ENCODE measurements at regions of chr1 and their contacts with region 1.

Region 1: DNA sequence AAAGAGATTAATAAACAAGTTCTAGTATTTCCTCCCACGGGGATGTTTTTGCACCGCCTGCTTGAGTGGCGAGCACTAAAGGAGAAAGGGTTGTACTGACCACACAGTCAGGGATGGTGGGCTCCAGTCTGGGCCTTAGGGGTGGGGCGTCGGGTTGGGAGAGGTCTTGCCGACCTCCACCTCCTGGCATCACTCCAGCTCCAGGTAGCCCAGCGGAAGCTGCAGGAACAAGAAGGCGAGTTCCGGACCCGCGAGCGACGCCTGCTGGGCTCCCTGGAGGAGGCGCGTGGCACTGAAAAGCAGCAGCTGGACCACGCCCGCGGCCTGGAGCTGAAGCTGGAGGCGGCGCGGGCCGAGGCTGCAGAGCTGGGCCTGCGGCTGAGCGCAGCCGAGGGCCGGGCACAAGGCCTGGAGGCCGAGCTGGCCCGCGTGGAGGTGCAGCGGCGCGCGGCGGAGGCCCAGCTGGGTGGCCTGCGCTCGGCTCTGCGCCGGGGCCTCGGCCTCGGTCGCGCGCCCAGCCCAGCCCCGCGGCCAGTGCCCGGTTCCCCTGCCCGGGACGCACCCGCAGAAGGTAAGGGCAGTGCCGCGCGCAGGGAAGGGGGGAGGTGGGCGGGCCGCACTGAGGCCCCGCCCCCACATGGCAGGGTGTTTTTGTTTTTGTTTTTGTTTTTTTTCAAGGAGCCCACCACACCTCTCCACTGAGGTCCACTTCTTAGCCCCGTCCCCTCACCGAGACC is 19.7 kb downstream of the MFAP2 start:
- DNase-seq: peak; percentile 79 to 88 (median 86)
- ATAC-seq: peak; percentile 41 to 91 (median 78)
- H3K4me3 ChIP-seq: peak overlapping the region in 10 of 12 donors; percentile 22 to 58 (median 48)
- H3K27ac ChIP-seq: peak overlapping the region in 4 of 12 donors; percentile 27 to 59 (median 41)
- H3K4me1 ChIP-seq: peaks cover 0 to 15% (median 2%) of the 10 kb centered on the region in 12 donors
- H3K27me3 ChIP-seq: no peaks in the 10 kb centered on the region
- CTCF ChIP-seq: peak; percentile 13 to 74 (median 60)
- POLR2A ChIP-seq: no peak

Region 2: DNA sequence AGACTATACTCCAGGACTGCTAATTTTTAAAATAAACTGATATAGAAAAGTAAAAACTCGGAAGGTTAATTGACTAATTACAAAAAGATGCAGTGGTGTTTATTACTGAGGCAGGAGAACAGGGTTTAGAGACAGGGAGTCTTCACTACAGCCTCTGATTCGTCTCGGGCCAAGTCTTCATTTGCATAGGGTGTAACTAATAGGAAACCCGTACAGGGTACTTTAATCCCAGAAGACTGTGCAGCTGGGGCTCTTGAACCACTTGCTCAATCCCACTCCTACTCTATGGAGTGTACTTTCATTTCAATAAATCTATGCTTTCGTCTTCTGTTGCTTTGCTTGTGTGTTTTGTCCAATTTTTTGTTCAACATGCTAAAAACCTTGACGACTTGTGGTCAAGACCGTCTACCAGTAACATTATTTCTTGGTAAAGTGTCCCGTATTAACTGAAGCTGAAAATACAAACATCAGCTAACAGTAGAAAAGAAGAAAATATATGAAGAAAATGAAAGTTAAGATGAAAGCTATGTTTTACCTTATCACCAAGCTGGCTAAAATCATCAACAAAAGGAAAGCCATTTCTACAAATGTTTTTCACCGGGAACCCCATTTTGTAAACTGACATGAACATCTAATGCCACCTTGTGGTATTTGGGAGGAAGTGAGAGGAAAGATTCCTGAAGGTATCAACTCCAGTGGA is 85.1 kb after region 1 on chr1:
- intact Hi-C with region 1: loop called in 2 of 10 experiments (anchors 2 kb)
- DNase-seq: no peak
- ATAC-seq: peak; percentile 40 to 76 (median 62)
- H3K4me3 ChIP-seq: peak overlapping the region in 8 of 12 donors; percentile 9 to 40 (median 22)
- H3K27ac ChIP-seq: peak overlapping the region in 4 of 12 donors; percentile 12 to 45 (median 26)
- H3K4me1 ChIP-seq: peaks cover 0 to 30% (median 10%) of the 10 kb centered on the region in 12 donors
- H3K27me3 ChIP-seq: no peaks in the 10 kb centered on the region
- CTCF ChIP-seq: peak; percentile 61 to 83 (median 76)
- POLR2A ChIP-seq: no peak

Region 3: GRCh38 chr1:17236779-17237560 is 276.2 kb after region 1 on chr1:
- intact Hi-C with region 1: loop called in 1 of 10 experiments (anchors 10 kb)
- DNase-seq: peak; percentile 79 to 89 (median 81)
- ATAC-seq: peak; percentile 64 to 86 (median 84)
- H3K4me3 ChIP-seq: no peak overlapping the region
- H3K27ac ChIP-seq: no peak overlapping the region
- H3K4me1 ChIP-seq: peaks cover 0 to 9% (median 0%) of the 10 kb centered on the region in 12 donors
- H3K27me3 ChIP-seq: peaks cover 0 to 44% (median 6%) of the 10 kb centered on the region in 9 donors
- CTCF ChIP-seq: peak; percentile 75 to 91 (median 84)
- POLR2A ChIP-seq: no peak

Region 4: DNA sequence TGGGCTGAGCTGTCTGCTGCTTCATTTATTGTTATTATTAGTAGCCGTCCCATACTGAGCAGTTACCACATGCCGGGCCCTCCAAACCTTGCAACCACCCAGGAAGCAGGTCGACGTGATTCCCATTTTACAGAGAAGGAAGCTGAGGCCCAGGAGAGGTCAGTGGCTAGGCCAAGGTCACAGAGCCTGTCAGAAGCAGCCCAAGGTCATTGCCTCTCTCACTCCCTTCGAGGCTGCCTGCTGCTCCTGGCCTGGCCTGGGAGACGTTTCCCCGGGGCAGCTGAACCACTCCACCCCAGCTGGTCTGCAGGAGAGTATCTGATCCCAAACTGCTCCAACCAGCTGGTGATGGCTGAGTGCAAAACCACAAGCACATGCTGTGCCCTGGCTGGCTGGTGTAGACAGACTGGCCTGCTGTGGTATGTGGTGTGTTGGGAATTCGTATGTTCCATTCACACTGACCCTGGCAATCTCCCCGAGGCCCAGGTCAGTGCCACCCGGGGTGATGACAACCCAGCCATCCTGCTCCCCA is 353.8 kb after region 1 on chr1:
- intact Hi-C with region 1: no loop called
- DNase-seq: no peak
- ATAC-seq: no peak
- H3K4me3 ChIP-seq: no peak overlapping the region
- H3K27ac ChIP-seq: no peak overlapping the region
- H3K4me1 ChIP-seq: no peaks in the 10 kb centered on the region
- H3K27me3 ChIP-seq: peaks cover 0 to 60% (median 9%) of the 10 kb centered on the region in 9 donors
- CTCF ChIP-seq: no peak
- POLR2A ChIP-seq: no peak

Measured in heart left ventricle (tissue), 16 donors.